ENCODE measurements at regions of chr2 and their contacts with region 1.

Region 1: GRCh38 chr2:209840434-209840833 is 68.8 kb downstream of the UNC80 start:
- DNase-seq: no peak
- H3K4me3 ChIP-seq: no peak overlapping the region
- H3K27ac ChIP-seq: no peak overlapping the region
- H3K4me1 ChIP-seq: no peaks in the 10 kb centered on the region
- H3K27me3 ChIP-seq: no peaks in the 10 kb centered on the region
- CTCF ChIP-seq: no peak
- POLR2A ChIP-seq: no peak

Region 2: DNA sequence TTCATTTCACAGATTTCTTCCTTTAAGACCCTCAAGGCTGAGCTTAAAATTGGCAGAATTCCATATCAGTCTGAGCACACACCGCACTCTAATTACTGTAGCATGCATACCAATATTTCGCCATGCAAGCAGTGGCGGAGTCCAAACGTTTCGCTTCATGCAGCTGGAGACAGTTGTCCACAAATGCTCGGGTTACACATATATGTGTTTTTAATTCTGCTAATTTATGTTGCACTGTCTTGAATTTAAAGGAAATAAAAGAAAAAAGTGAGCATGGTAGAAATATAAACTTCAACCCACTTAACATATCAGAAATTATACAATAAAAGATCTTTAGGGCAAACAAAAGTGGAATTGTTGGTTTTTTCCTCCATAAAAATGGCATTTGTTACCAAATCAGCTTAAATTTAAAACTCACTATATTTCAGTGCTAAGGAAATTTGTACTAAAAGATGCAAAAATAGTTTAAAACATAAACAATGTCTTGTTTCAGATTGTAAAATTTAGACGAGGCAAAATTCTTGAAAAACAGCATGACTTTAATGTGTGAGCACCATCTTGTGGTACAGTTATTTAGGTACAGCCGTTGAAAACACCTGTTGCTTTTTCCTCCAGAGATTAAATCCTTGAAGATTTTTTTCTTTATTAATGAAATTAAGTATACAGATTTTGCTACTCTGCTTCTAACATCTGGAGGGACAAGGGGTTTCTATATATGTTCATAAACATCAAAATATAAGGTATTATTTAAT is 354.8 kb after region 1 on chr2:
- intact Hi-C with region 1: no loop called
- DNase-seq: no peak
- H3K4me3 ChIP-seq: no peak overlapping the region
- H3K27ac ChIP-seq: no peak overlapping the region
- H3K4me1 ChIP-seq: no peaks in the 10 kb centered on the region
- H3K27me3 ChIP-seq: no peaks in the 10 kb centered on the region
- CTCF ChIP-seq: peak in 3 of 4 experiments; percentile 54 to 81 (median 80)
- POLR2A ChIP-seq: no peak

Region 3: GRCh38 chr2:210283796-210284195 is 443.4 kb after region 1 on chr2:
- intact Hi-C with region 1: loop called (anchors 5 kb)
- DNase-seq: no peak
- H3K4me3 ChIP-seq: no peak overlapping the region
- H3K27ac ChIP-seq: no peak overlapping the region
- H3K4me1 ChIP-seq: no peaks in the 10 kb centered on the region
- H3K27me3 ChIP-seq: no peaks in the 10 kb centered on the region
- CTCF ChIP-seq: no peak
- POLR2A ChIP-seq: no peak